PC-3 (cell line): ENCODE measurements at regions of chr15 and their contacts with region 1.

Region 1: GRCh38 chr15:32844118-32844711 is 126.4 kb downstream of the GREM1 start:
- DNase-seq: peak; percentile 69
- ATAC-seq: peak; percentile 60; the same call in 1 of the 2 replicates
- H3K4me3 ChIP-seq: no peak overlapping the region
- H3K27ac ChIP-seq: peak overlapping the region; percentile 37; the same call in 1 of the 2 replicates
- H3K4me1 ChIP-seq: peaks cover 32% of the 10 kb centered on the region
- H3K27me3 ChIP-seq: no peaks in the 10 kb centered on the region
- CTCF ChIP-seq: peak; percentile 73

Region 2: DNA sequence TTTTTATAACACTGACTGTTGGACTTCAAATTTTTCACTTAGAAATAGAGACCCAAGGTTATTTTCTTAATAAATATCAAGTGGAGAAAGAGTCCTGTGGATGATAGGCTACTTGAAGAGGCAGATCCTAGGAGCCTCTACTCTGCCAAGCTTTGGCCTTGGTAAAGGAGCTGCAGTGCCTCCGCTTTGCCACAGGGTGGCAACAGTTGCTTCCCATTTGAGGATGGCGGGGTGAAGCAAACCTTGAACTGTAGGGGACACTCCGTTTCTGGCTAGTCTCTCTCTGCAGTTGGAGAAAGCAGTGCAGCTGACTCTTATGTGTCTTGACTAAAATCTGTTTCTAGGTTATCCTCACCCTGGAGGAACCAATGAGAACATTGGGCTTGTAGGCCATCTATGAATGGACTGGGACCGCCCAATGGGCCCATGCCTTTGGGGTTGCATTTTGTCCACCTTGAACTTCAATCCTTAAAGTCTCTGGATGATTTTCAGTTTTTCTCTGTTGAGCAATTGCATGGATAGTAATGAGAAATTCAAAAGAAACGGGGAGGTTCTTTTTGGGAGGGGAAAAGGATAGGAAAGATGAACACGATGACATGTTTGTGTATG is 192.9 kb before region 1 on chr15:
- CTCF ChIA-PET with region 1: interaction called, 13 read pairs
- POLR2A ChIA-PET with region 1: no interaction called
- intact Hi-C with region 1: no loop called
- DNase-seq: peak; percentile 88
- ATAC-seq: peak; percentile 78
- H3K4me3 ChIP-seq: no peak overlapping the region
- H3K27ac ChIP-seq: peak overlapping the region; percentile 69
- H3K4me1 ChIP-seq: peaks cover 23% of the 10 kb centered on the region
- H3K27me3 ChIP-seq: no peaks in the 10 kb centered on the region
- CTCF ChIP-seq: peak; percentile 96

Region 3: DNA sequence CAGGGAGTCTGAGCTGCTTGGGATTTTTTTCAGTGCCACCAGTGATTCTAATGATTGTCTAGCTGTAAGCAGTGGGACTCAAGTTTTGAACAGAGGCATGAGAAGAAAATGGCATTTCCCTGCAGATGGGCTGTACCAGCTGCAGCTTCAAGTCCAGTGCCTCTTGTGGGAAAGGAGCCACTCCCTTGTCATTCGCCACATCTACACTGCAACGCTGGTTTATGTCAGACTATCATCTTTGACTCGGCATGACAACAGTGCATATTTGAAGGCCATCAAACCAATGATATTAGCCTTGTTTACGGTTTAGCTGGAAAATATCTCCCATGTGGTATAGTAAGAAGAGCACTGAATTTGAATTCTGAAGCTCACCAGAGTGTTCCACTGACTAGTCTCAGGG is 180.5 kb before region 1 on chr15:
- CTCF ChIA-PET with region 1: interaction called, 11 read pairs
- POLR2A ChIA-PET with region 1: interaction called, 5 read pairs
- intact Hi-C with region 1: loop called (anchors 1 kb)
- DNase-seq: no peak
- ATAC-seq: no peak
- H3K4me3 ChIP-seq: no peak overlapping the region
- H3K27ac ChIP-seq: peak overlapping the region; percentile 34
- H3K4me1 ChIP-seq: peaks cover 28% of the 10 kb centered on the region
- H3K27me3 ChIP-seq: no peaks in the 10 kb centered on the region
- CTCF ChIP-seq: no peak

Region 4: DNA sequence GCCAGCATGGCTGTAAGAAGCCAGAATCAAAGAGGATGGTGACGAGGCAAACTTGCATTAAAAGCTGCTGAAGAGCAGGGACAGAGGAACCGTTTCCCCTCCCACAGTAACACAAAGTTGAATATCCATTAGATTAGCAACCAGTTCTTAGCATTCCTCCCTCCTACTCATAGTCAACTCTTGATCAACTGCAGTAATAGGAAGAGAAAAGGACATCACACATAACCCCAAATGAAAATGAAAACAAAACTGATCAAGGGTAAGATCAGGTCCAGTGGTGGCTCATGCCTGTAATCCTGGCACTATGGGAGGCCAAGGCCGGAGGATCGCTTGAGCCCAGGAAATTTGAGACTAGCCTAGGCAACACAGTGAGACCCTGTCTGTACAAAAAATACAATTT is 38.7 kb after region 1 on chr15:
- CTCF ChIA-PET with region 1: interaction called, 11 read pairs
- POLR2A ChIA-PET with region 1: no interaction called
- intact Hi-C with region 1: no loop called
- DNase-seq: no peak
- ATAC-seq: no peak
- H3K4me3 ChIP-seq: no peak overlapping the region
- H3K27ac ChIP-seq: no peak overlapping the region
- H3K4me1 ChIP-seq: peaks cover 11% of the 10 kb centered on the region
- H3K27me3 ChIP-seq: no peaks in the 10 kb centered on the region
- CTCF ChIP-seq: no peak

Region 5: DNA sequence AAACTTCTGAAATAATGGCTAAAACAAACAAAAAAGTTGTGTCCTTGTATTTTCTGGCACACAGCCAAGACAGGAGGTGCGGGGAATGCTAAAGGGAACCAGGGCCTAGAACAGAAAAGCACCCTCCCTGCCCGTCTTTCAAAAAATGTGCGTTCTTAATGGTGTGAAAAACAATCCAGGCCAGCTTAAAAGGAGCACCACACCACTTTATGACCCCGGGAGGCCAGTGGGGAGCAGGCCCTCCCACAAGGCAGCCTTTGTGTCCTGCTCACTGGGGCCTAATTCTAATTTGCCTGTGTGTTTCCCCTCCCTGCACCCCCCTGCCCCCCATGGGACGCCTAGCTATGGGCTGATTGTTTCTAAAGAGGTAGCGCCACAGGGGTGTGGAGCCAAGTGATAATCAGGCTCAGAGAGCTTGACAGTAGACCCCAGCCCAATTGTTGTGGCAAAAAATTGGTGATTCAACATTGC is 54.9 kb after region 1 on chr15:
- CTCF ChIA-PET with region 1: no interaction called
- POLR2A ChIA-PET with region 1: no interaction called
- intact Hi-C with region 1: no loop called
- DNase-seq: peak; percentile 25
- ATAC-seq: peak; percentile 40; the same call in 1 of the 2 replicates
- H3K4me3 ChIP-seq: no peak overlapping the region
- H3K27ac ChIP-seq: no peak overlapping the region
- H3K4me1 ChIP-seq: peaks cover 6% of the 10 kb centered on the region; the same call in 1 of the 2 replicates
- H3K27me3 ChIP-seq: no peaks in the 10 kb centered on the region
- CTCF ChIP-seq: no peak

Region 6: GRCh38 chr15:32936283-32936918 is 92.2 kb after region 1 on chr15:
- CTCF ChIA-PET with region 1: interaction called, 20 read pairs
- POLR2A ChIA-PET with region 1: no interaction called
- intact Hi-C with region 1: no loop called
- DNase-seq: peak; percentile 65
- ATAC-seq: peak; percentile 46; the same call in 1 of the 2 replicates
- H3K4me3 ChIP-seq: no peak overlapping the region
- H3K27ac ChIP-seq: no peak overlapping the region
- H3K4me1 ChIP-seq: no peaks in the 10 kb centered on the region
- H3K27me3 ChIP-seq: no peaks in the 10 kb centered on the region
- CTCF ChIP-seq: peak; percentile 80

Region 7: GRCh38 chr15:32956006-32956405 is 111.8 kb after region 1 on chr15:
- CTCF ChIA-PET with region 1: interaction called, 14 read pairs
- POLR2A ChIA-PET with region 1: no interaction called
- intact Hi-C with region 1: no loop called
- DNase-seq: peak; percentile 75
- ATAC-seq: peak; percentile 86
- H3K4me3 ChIP-seq: no peak overlapping the region
- H3K27ac ChIP-seq: 0 out of 2 replicates have a peak overlapping the region, but pooled peaks have one; percentile 1
- H3K4me1 ChIP-seq: peaks cover 17% of the 10 kb centered on the region
- H3K27me3 ChIP-seq: no peaks in the 10 kb centered on the region
- CTCF ChIP-seq: peak; percentile 89

Region 8: GRCh38 chr15:32994810-32995424 is 150.7 kb after region 1 on chr15:
- CTCF ChIA-PET with region 1: interaction called, 5 read pairs
- POLR2A ChIA-PET with region 1: no interaction called
- intact Hi-C with region 1: loop called (anchors 5 kb)
- DNase-seq: peak; percentile 69
- ATAC-seq: peak; percentile 61
- H3K4me3 ChIP-seq: no peak overlapping the region
- H3K27ac ChIP-seq: no peak overlapping the region
- H3K4me1 ChIP-seq: 0 out of 2 replicates have a peak, but pooled peaks cover 3% of the 10 kb centered on the region
- H3K27me3 ChIP-seq: no peaks in the 10 kb centered on the region
- CTCF ChIP-seq: peak; percentile 81